ENCODE measurements at regions of chr3 and their contacts with region 1.

Region 1: GRCh38 chr3:188697127-188697526 is 474.6 kb upstream of the TPRG1 start:
- DNase-seq: no peak
- ATAC-seq: peak; percentile 80
- H3K4me3 Mint-ChIP-seq: peak overlapping the region; percentile 20
- H3K27ac Mint-ChIP-seq: peak overlapping the region; percentile 86
- H3K4me1 Mint-ChIP-seq: peaks cover 72% of the 10 kb centered on the region
- H3K27me3 Mint-ChIP-seq: no peaks in the 10 kb centered on the region
- CTCF ChIP-seq: no peak

Region 2: DNA sequence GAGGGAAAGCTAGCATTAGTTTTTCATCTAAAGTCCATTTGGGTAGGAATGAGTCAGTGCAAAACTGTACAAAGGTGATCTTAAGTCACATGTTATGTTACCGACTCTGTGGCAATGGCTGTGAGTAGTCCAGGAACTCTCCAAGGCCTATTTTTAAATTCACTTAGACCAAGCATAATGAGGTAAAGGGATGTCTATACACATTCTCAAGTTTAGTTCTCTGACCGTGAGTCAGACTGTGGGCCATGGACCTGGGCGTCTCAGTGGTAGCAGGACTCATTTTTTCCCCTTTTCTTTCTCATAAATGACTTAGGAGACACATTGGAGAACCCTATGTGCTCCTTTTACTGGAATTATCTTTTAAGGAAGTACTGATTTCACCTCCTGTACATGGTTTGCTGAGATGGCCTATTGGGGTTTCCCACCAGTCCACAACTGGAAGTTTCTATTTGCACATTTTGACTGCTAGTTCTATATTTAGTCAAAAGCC is 14.1 kb before region 1 on chr3:
- CTCF ChIA-PET with region 1: interaction called, 4 read pairs
- POLR2A ChIA-PET with region 1: interaction called, 4 read pairs
- intact Hi-C with region 1: loop called (anchors 1 kb)
- DNase-seq: no peak
- ATAC-seq: peak; percentile 25
- H3K4me3 Mint-ChIP-seq: no peak overlapping the region
- H3K27ac Mint-ChIP-seq: peak overlapping the region; percentile 62
- H3K4me1 Mint-ChIP-seq: peaks cover 64% of the 10 kb centered on the region
- H3K27me3 Mint-ChIP-seq: no peaks in the 10 kb centered on the region
- CTCF ChIP-seq: no peak

Region 3: GRCh38 chr3:188729422-188729821 is 32.3 kb after region 1 on chr3:
- CTCF ChIA-PET with region 1: no interaction called
- POLR2A ChIA-PET with region 1: no interaction called
- intact Hi-C with region 1: no loop called
- DNase-seq: no peak
- ATAC-seq: no peak
- H3K4me3 Mint-ChIP-seq: peak overlapping the region; percentile 53
- H3K27ac Mint-ChIP-seq: peak overlapping the region; percentile 59
- H3K4me1 Mint-ChIP-seq: peaks cover 49% of the 10 kb centered on the region
- H3K27me3 Mint-ChIP-seq: no peaks in the 10 kb centered on the region
- CTCF ChIP-seq: no peak